ENCODE measurements at regions of chr19 and their contacts with region 1.

Region 1: DNA sequence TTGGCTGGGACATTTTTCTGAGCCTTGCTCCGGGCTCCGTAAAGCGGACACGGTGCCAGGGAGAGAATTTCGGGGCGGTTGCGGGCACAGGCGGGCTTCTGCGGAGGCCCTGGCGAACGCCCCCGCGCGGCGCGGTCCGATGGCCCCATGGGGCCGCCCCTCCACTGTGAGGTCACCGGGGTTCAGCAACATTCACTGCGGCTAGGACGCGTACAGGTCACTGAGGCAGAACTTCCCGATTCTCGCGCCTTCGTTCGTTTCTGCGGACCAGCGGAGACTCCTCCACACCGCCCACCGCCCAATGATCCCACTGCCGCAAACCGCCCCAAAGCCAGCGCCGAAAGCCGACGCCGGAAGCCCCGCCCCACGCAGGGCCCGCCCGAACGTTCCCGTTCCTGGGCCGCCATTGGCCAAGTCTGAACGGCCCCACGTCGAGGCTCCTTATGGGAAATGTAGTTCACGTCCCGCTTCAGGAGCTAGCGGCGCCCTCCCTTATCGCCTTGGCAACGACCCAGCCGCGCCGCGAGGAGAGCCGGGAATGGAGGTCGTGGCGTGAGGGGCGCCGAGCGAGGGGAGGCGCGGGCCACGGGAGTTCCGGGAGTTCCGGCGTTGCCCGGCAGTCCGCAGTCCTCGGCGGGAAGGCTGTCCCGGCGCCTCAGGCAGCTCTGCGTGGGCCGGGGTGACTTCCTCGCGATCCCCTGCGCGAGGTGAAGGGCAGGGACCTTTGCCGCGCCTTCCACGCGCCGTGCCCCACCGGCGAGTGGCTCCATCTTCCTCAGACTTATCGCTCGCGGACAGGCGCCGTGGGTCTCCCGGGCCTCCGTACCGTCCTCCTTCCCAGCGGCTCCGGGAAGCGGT is at the start of gene ZNF584:
- DNase-seq: peak; percentile 90
- H3K4me3 Mint-ChIP-seq: peak within 1 kb of the TSS; percentile 84
- H3K27ac Mint-ChIP-seq: peak within 1 kb of the TSS; percentile 98
- H3K4me1 Mint-ChIP-seq: peaks cover 35% of the 10 kb centered on the region
- H3K27me3 Mint-ChIP-seq: no peaks in the 10 kb centered on the region
- total RNA-seq, gene ZNF584: 17.8 and 20.6 TPM in 2 replicates

Region 2: DNA sequence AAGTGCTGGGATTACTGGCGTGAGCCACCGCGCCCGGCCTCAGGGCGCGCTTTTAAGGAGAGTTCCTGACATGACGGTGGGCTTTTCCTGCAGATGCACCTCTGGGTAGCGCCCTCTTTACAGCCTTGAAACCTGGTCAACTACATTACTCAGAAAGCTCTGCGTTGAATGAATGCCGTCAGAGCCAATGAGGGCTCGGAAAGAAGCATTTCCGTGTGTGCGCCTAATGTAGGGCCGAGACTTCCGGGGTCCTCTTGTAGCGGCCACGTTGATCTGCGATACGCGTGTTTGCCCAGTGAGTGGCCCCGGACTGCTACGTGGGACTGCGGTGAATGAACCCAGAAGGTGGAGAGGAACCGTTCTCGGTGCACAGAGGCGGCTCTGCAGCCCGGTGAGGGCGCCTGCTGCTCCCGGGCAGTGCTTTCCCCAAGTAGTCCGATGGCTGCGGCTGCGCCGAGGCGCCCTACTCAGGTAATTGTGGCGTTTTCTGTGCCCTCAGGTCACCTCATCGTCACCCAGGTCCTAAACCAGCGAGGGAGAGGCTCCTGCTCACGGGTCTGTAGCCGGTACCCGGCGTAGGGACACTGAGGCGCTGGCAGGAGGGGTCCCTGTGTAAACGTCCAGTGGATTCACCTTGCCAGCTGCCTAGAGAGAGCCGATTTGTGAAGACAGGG is 588.8 kb before region 1 on chr19:
- intact Hi-C with region 1: loop called (anchors 2 kb)
- DNase-seq: peak; percentile 76
- H3K4me3 Mint-ChIP-seq: peak overlapping the region; percentile 99
- H3K27ac Mint-ChIP-seq: peak overlapping the region; percentile 98
- H3K4me1 Mint-ChIP-seq: peaks cover 50% of the 10 kb centered on the region
- H3K27me3 Mint-ChIP-seq: no peaks in the 10 kb centered on the region

Region 3: GRCh38 chr19:58278157-58279041 is 130.0 kb before region 1 on chr19 and contains the start of gene ZNF8:
- intact Hi-C with region 1: loop called (anchors 1 kb)
- DNase-seq: peak; percentile 97
- H3K4me3 Mint-ChIP-seq: peak within 1 kb of the TSS; percentile 92
- H3K27ac Mint-ChIP-seq: peak within 1 kb of the TSS; percentile 93
- H3K4me1 Mint-ChIP-seq: peaks cover 23% of the 10 kb centered on the region
- H3K27me3 Mint-ChIP-seq: no peaks in the 10 kb centered on the region
- total RNA-seq, gene ZNF8: 4.0 and 4.4 TPM in 2 replicates

Region 4: GRCh38 chr19:58451358-58452101 is 43.1 kb after region 1 on chr19 and contains the start of gene ZNF324B:
- intact Hi-C with region 1: loop called (anchors 1 kb)
- DNase-seq: peak; percentile 95
- H3K4me3 Mint-ChIP-seq: peak within 1 kb of the TSS; percentile 85
- H3K27ac Mint-ChIP-seq: peak within 1 kb of the TSS; percentile 48
- H3K4me1 Mint-ChIP-seq: peaks cover 18% of the 10 kb centered on the region
- H3K27me3 Mint-ChIP-seq: peaks cover 7% of the 10 kb centered on the region
- total RNA-seq, gene ZNF324B: 14.3 and 15.1 TPM in 2 replicates

Region 5: GRCh38 chr19:58475714-58476497 is 67.5 kb after region 1 on chr19 and contains the start of gene ZNF446:
- intact Hi-C with region 1: loop called (anchors 1 kb)
- DNase-seq: peak; percentile 95
- H3K4me3 Mint-ChIP-seq: peak within 1 kb of the TSS; percentile 88
- H3K27ac Mint-ChIP-seq: peak within 1 kb of the TSS; percentile 99
- H3K4me1 Mint-ChIP-seq: peaks cover 25% of the 10 kb centered on the region
- H3K27me3 Mint-ChIP-seq: no peaks in the 10 kb centered on the region
- total RNA-seq, gene ZNF446: 6.6 and 6.7 TPM in 2 replicates

Region 6: GRCh38 chr19:58558623-58559274 is 150.4 kb after region 1 on chr19:
- intact Hi-C with region 1: loop called (anchors 1 kb)
- DNase-seq: peak; percentile 100
- H3K4me3 Mint-ChIP-seq: peak overlapping the region; percentile 95
- H3K27ac Mint-ChIP-seq: peak overlapping the region; percentile 99
- H3K4me1 Mint-ChIP-seq: peaks cover 66% of the 10 kb centered on the region
- H3K27me3 Mint-ChIP-seq: peaks cover 1% of the 10 kb centered on the region

Measured in activated T-helper 1 cell treated with anti-CD3 and anti-CD28 coated beads, Interleukin-12 subunit alpha, Interleukin-12 subunit beta, Interleukin-2, Interleukin-4 antibody, amounts not matched to agents 30 ng/mL and 10 ng/mL and 1 ng/mL, durations not matched to agents 14 hours and 24 hours and 36 hours (primary cell).